RWPE1 (cell line): ENCODE measurements at regions of chr5 and their contacts with region 1.

Region 1: GRCh38 chr5:139574641-139575312 is 13.6 kb downstream of the UBE2D2 start:
- DNase-seq: no peak
- H3K27ac ChIP-seq: no peak overlapping the region
- CTCF ChIP-seq: peak; percentile 67

Region 2: GRCh38 chr5:138536215-138536614 is 1038.6 kb before region 1 on chr5:
- CTCF ChIA-PET with region 1: interaction called, 12 read pairs
- POLR2A ChIA-PET with region 1: no interaction called
- DNase-seq: no peak
- H3K27ac ChIP-seq: no peak overlapping the region
- CTCF ChIP-seq: no peak

Region 3: GRCh38 chr5:139651853-139652787 is 77.3 kb after region 1 on chr5:
- CTCF ChIA-PET with region 1: no interaction called
- POLR2A ChIA-PET with region 1: no interaction called
- DNase-seq: peak; percentile 94
- H3K27ac ChIP-seq: peak overlapping the region; percentile 25; the same call in 1 of the 2 replicates
- CTCF ChIP-seq: no peak